HepG2 (cell line): ENCODE measurements at regions of chr5 and their contacts with region 1.

Region 1: GRCh38 chr5:179732417-179732917 is at the start of gene MAML1:
- DNase-seq: peak; percentile 99
- ATAC-seq: peak; percentile 94
- H3K4me3 ChIP-seq: peak within 1 kb of the TSS; percentile 93 to 98 (median 96)
- H3K27ac ChIP-seq: peak within 1 kb of the TSS; percentile 88
- H3K4me1 ChIP-seq: peaks cover 55% of the 10 kb centered on the region
- H3K27me3 ChIP-seq: no peaks in the 10 kb centered on the region
- CTCF ChIP-seq: no peak
- EP300 ChIP-seq: no peak
- POLR2A ChIP-seq: peak; percentile 51 to 61
- RAD21 ChIP-seq: no peak
- total RNA-seq, gene MAML1: 10.0 and 12.1 TPM in 2 replicates

Region 2: GRCh38 chr5:179176571-179177230 is 555.8 kb before region 1 on chr5:
- CTCF ChIA-PET with region 1: no interaction called
- POLR2A ChIA-PET with region 1: no interaction called
- in situ Hi-C with region 1: no loop called
- intact Hi-C with region 1: no loop called
- DNase-seq: no peak
- ATAC-seq: no peak
- H3K4me3 ChIP-seq: no peak overlapping the region
- H3K27ac ChIP-seq: no peak overlapping the region
- H3K4me1 ChIP-seq: peaks cover 11% of the 10 kb centered on the region; the same call in 1 of the 2 replicates
- H3K27me3 ChIP-seq: peaks cover 0 to 14% of the 10 kb centered on the region in 2 experiments; a peak in 3 of 5 replicates
- CTCF ChIP-seq: no peak
- EP300 ChIP-seq: no peak
- POLR2A ChIP-seq: no peak
- RAD21 ChIP-seq: no peak

Region 3: GRCh38 chr5:179678223-179679013 is 54.0 kb before region 1 on chr5:
- CTCF ChIA-PET with region 1: no interaction called
- POLR2A ChIA-PET with region 1: interaction called, 37 read pairs
- in situ Hi-C with region 1: no loop called
- intact Hi-C with region 1: no loop called
- DNase-seq: peak; percentile 90
- ATAC-seq: peak; percentile 83
- H3K4me3 ChIP-seq: peak overlapping the region; percentile 69 to 91 (median 81)
- H3K27ac ChIP-seq: peak overlapping the region; percentile 87
- H3K4me1 ChIP-seq: peaks cover 63% of the 10 kb centered on the region
- H3K27me3 ChIP-seq: no peaks in the 10 kb centered on the region; a peak in 1 of 5 replicates
- CTCF ChIP-seq: peak; percentile 68
- EP300 ChIP-seq: peak in 1 of 2 experiments; percentile 35; a peak in 1 of 4 replicates
- POLR2A ChIP-seq: peak in 1 of 2 experiments; percentile 93; a peak in 2 of 4 replicates
- RAD21 ChIP-seq: peak; percentile 64

Region 4: GRCh38 chr5:179697993-179698934 is 34.2 kb before region 1 on chr5:
- CTCF ChIA-PET with region 1: no interaction called
- POLR2A ChIA-PET with region 1: interaction called, 26 read pairs
- in situ Hi-C with region 1: no loop called
- intact Hi-C with region 1: no loop called
- DNase-seq: peak; percentile 98
- ATAC-seq: peak; percentile 95
- H3K4me3 ChIP-seq: peak overlapping the region; percentile 74 to 91 (median 91)
- H3K27ac ChIP-seq: peak overlapping the region; percentile 96
- H3K4me1 ChIP-seq: peaks cover 53% of the 10 kb centered on the region
- H3K27me3 ChIP-seq: no peaks in the 10 kb centered on the region; a peak in 1 of 5 replicates
- CTCF ChIP-seq: 0 out of 2 replicates have a peak, but pooled peaks have one; percentile 11
- EP300 ChIP-seq: peak in 1 of 2 experiments; percentile 34; a peak in 2 of 4 replicates
- POLR2A ChIP-seq: peak; percentile 68 to 86
- RAD21 ChIP-seq: peak; percentile 65

Region 5: GRCh38 chr5:179755022-179755421 is 22.6 kb after region 1 on chr5:
- CTCF ChIA-PET with region 1: no interaction called
- POLR2A ChIA-PET with region 1: interaction called, 21 read pairs
- in situ Hi-C with region 1: no loop called
- intact Hi-C with region 1: no loop called
- DNase-seq: peak; percentile 84
- ATAC-seq: peak; percentile 93
- H3K4me3 ChIP-seq: peak overlapping the region in 2 of 3 experiments; percentile 13 to 20; a peak in 2 of 6 replicates
- H3K27ac ChIP-seq: peak overlapping the region; percentile 72
- H3K4me1 ChIP-seq: peaks cover 45% of the 10 kb centered on the region
- H3K27me3 ChIP-seq: no peaks in the 10 kb centered on the region
- CTCF ChIP-seq: no peak
- EP300 ChIP-seq: peak in 1 of 2 experiments; percentile 56; a peak in 2 of 4 replicates
- POLR2A ChIP-seq: no peak
- RAD21 ChIP-seq: no peak